Activated B cell treated with CpG ODN at 0.5 μM for 24 hours (primary cell): ENCODE measurements at regions of chr16 and their contacts with region 1.

Region 1: DNA sequence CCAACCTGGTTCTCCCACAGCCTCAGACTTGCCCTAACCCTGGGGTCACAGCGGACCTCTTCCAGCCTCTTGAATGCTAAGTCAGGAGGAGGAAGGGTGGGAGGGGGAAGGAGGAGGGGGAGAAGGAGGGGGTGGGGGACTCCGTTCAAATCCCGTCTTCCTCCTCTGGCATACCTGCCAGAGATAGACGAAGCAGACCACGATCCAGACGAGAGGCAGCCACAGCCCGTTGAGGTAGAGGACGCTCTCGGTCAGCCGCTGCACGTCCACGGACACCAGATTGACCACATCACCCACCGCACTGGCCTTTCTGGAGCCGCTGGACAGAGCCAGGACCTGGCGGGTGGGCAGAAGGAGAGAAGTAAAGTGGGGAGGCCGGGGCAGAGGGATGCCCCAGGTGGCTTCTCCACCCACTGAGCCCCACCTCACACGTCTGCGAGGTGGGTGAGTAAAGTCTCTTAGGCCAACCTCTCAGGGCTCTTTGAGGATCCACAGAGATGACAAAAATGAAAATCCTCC is 25.4 kb downstream of the ABCC6 start:
- DNase-seq: no peak
- ATAC-seq: no peak
- H3K4me3 Mint-ChIP-seq: no peak overlapping the region
- H3K27ac Mint-ChIP-seq: no peak overlapping the region
- H3K4me1 Mint-ChIP-seq: peaks cover 27% of the 10 kb centered on the region
- H3K27me3 Mint-ChIP-seq: no peaks in the 10 kb centered on the region
- CTCF ChIP-seq: no peak

Region 2: GRCh38 chr16:15704545-15704987 is 493.3 kb before region 1 on chr16:
- CTCF ChIA-PET with region 1: no interaction called
- POLR2A ChIA-PET with region 1: no interaction called
- intact Hi-C with region 1: loop called (anchors 5 kb)
- DNase-seq: peak; percentile 53
- ATAC-seq: peak; percentile 78
- H3K4me3 Mint-ChIP-seq: no peak overlapping the region
- H3K27ac Mint-ChIP-seq: no peak overlapping the region
- H3K4me1 Mint-ChIP-seq: peaks cover 5% of the 10 kb centered on the region
- H3K27me3 Mint-ChIP-seq: no peaks in the 10 kb centered on the region
- CTCF ChIP-seq: peak; percentile 47